ENCODE measurements at regions of chr7 and their contacts with region 1.

Region 1: GRCh38 chr7:2354186-2354938 is at the start of gene EIF3B:
- DNase-seq: peak; percentile 78 to 98 (median 82)

Region 2: DNA sequence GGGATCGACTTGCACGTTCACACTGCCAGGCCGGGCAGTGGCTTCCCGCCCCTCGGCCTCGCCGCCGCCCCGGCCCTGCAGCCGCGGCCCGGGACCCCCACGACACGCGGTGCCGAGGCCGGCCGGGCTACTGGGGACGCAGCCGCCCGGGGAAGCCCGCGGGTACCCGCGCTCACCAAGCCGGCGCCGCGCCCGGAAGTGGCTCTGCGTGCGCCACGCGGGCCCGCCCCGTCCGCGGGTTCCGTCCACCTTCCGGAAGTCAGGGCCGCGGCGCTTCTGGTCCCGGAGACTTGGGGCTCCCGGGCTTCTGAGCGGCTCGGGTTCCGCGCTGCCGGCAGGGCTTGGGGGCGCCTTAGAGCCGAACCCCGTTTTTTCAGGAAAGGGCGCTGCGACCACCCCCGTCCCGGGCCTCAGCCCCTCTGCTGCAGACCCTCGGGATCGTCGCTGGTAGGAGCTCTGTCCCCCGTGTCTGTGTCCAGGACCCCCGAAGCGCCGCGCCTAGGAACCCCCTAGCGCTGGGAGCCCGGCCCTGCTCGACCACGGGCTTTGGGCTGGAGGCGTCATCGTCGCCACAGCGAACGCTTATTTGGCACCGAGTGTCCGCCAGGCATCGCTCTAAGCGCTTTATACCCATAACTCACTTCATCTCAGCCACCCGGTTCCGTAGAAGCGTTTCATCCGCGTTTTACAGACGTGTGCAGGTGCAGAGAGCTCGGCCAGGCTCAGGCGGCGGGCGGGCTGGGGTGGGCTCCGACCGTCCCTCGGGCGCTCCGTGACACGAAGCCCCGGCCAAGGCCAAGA is 784.3 kb before region 1 on chr7 and contains the start of gene PSMG3:
- intact Hi-C with region 1: loop called (anchors 10 kb)
- DNase-seq: peak; percentile 83 to 99 (median 92)

Region 3: DNA sequence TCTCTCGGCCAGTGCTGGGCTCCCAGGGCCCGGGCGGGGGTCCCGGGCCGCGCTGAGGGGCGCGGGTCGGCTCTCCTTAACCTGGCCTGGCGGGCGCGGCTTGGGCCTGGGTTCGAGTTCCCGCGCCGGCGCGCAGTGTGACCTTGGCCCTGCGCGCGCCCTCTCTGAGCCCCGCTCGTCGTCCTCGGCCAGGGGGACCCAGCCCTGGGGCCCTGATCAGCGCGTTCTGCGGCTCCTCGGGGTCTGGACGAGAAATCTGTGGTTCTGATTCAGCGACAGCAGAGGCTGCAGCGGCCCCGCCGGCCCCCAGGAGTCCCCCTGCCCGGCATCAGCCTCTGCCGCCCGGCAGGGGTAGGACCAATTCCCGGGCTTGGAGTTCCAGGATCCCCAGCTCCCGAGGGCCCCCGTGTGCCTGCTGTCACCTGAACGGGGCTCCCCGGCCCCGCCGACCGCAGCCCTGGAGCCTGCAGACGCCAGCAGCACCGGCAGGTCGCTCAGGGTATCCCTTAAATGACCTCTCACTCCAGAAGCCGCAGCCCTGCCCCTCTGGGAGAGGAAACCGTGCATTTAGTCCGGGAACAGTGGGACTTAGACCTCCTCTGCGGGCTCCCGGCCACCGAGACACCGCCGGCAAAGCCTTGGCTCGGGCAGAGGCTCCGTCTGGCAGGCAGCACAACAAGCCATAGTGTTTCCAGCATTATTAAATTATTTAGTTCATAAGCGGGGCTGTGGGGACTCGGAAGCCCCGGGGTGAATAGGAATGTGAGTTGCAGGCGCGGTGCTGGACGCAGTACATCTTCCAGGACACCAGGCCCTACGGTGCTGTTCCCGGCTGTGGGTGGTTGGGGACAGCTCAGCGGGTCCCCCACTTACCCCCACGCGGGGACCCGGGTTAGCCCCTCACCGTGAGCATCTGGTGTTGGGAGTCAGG is 49.6 kb after region 1 on chr7:
- intact Hi-C with region 1: loop called (anchors 2 kb)
- DNase-seq: peak; percentile 22 to 91 (median 44)